Gastrocnemius medialis (tissue), 4 donors: ENCODE measurements at regions of chr7 and their contacts with region 1.

Region 1: GRCh38 chr7:87003872-87004798 is 55.3 kb downstream of the ELAPOR2 start:
- DNase-seq: no peak
- ATAC-seq: no peak
- H3K4me3 ChIP-seq: no peak overlapping the region
- H3K27ac ChIP-seq: no peak overlapping the region
- H3K4me1 ChIP-seq: peaks cover 11 to 23% of the 10 kb centered on the region in 2 donors
- H3K27me3 ChIP-seq: no peaks in the 10 kb centered on the region
- CTCF ChIP-seq: no peak
- POLR2A ChIP-seq: no peak

Region 2: GRCh38 chr7:86790383-86790782 is 213.8 kb before region 1 on chr7:
- in situ Hi-C with region 1: no loop called
- intact Hi-C with region 1: no loop called
- DNase-seq: no peak
- ATAC-seq: no peak
- H3K4me3 ChIP-seq: no peak overlapping the region
- H3K27ac ChIP-seq: no peak overlapping the region
- H3K4me1 ChIP-seq: peaks cover 0 to under 1% of the 10 kb centered on the region in 2 donors
- H3K27me3 ChIP-seq: no peaks in the 10 kb centered on the region
- CTCF ChIP-seq: no peak
- POLR2A ChIP-seq: no peak

Region 3: GRCh38 chr7:86942081-86942480 is 62.1 kb before region 1 on chr7:
- in situ Hi-C with region 1: no loop called
- intact Hi-C with region 1: no loop called
- DNase-seq: no peak
- ATAC-seq: no peak
- H3K4me3 ChIP-seq: no peak overlapping the region
- H3K27ac ChIP-seq: no peak overlapping the region
- H3K4me1 ChIP-seq: peaks cover 0 to 4% of the 10 kb centered on the region in 2 donors
- H3K27me3 ChIP-seq: no peaks in the 10 kb centered on the region
- CTCF ChIP-seq: no peak
- POLR2A ChIP-seq: no peak

Region 4: GRCh38 chr7:86955895-86956503 is 48.1 kb before region 1 on chr7:
- in situ Hi-C with region 1: no loop called
- intact Hi-C with region 1: loop called (anchors 5 kb)
- DNase-seq: no peak
- ATAC-seq: no peak
- H3K4me3 ChIP-seq: no peak overlapping the region
- H3K27ac ChIP-seq: no peak overlapping the region
- H3K4me1 ChIP-seq: peaks cover 0 to 6% of the 10 kb centered on the region in 2 donors
- H3K27me3 ChIP-seq: no peaks in the 10 kb centered on the region
- CTCF ChIP-seq: no peak
- POLR2A ChIP-seq: no peak